K562 (cell line): ENCODE measurements at regions of chr1 and their contacts with region 1.

Region 1: GRCh38 chr1:32357614-32358013 is 4.7 kb downstream of the FAM229A start:
- DNase-seq: peak in 1 of 4 experiments; percentile 18
- ATAC-seq: no peak
- H3K4me3 ChIP-seq: no peak overlapping the region
- H3K27ac ChIP-seq: no peak overlapping the region
- H3K4me1 ChIP-seq: peaks cover 17 to 21% of the 10 kb centered on the region in 2 experiments
- H3K27me3 ChIP-seq: no peaks in the 10 kb centered on the region
- CTCF ChIP-seq: no peak
- EP300 ChIP-seq: no peak
- POLR2A ChIP-seq: no peak; the same call in 1 of the 2 replicates
- RAD21 ChIP-seq: no peak

Region 2: GRCh38 chr1:32266921-32267591 is 90.6 kb before region 1 on chr1:
- CTCF ChIA-PET with region 1: no interaction called
- POLR2A ChIA-PET with region 1: no interaction called
- in situ Hi-C with region 1: no loop called
- intact Hi-C with region 1: no loop called
- DNase-seq: no peak
- ATAC-seq: no peak
- H3K4me3 ChIP-seq: no peak overlapping the region
- H3K27ac ChIP-seq: peak overlapping the region; percentile 28; the same call in 1 of the 3 replicates
- H3K4me1 ChIP-seq: peaks cover 0 to 9% of the 10 kb centered on the region in 2 experiments; a peak in 2 of 5 replicates
- H3K27me3 ChIP-seq: no peaks in the 10 kb centered on the region
- CTCF ChIP-seq: no peak
- EP300 ChIP-seq: no peak
- POLR2A ChIP-seq: no peak
- RAD21 ChIP-seq: no peak

Region 3: DNA sequence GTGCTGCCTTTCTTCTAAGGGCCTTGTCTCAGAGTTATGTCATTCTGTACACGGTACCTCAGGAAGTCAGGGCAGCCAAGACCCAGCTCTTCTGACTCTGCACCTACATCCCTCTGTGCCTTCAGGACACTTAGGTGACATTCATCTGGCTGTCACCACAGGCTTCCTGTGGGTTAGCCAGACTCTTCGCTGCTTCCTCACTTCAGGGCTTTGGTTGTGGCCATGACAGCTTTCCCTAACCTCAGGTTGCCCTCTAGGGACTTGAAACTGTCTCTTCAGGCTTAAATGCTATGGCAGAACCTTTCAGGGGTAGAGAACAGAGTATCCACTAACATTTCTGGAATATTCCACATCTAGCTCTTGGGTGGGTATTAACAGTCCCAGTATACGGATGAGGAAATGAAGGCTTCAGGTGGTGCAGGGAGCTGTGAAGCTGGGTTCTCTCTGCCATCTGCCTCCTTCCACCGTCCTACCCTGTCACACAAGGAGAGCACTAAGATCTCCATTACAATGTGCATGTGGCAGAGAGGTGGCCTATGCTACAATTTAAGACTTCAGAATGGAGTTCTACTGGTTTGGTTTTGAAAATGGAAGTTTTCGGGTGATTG is 14.6 kb after region 1 on chr1:
- CTCF ChIA-PET with region 1: no interaction called
- POLR2A ChIA-PET with region 1: interaction called, 36 read pairs
- in situ Hi-C with region 1: no loop called
- intact Hi-C with region 1: no loop called
- DNase-seq: peak in 1 of 4 experiments; percentile 15
- ATAC-seq: peak; percentile 43
- H3K4me3 ChIP-seq: no peak overlapping the region
- H3K27ac ChIP-seq: no peak overlapping the region; the same call in 2 of the 3 replicates
- H3K4me1 ChIP-seq: no peaks in the 10 kb centered on the region
- H3K27me3 ChIP-seq: no peaks in the 10 kb centered on the region
- CTCF ChIP-seq: peak in 2 of 3 experiments; percentile 24 to 37; a peak in 3 of 6 replicates
- EP300 ChIP-seq: no peak
- POLR2A ChIP-seq: peak; percentile 16; the same call in 1 of the 2 replicates
- RAD21 ChIP-seq: peak in 1 of 2 experiments; percentile 30; a peak in 2 of 4 replicates

Region 4: GRCh38 chr1:32400876-32401631 is 43.4 kb after region 1 on chr1:
- CTCF ChIA-PET with region 1: no interaction called
- POLR2A ChIA-PET with region 1: no interaction called
- in situ Hi-C with region 1: no loop called
- intact Hi-C with region 1: no loop called
- DNase-seq: peak; percentile 90 to 92 (median 91)
- ATAC-seq: peak; percentile 96
- H3K4me3 ChIP-seq: no peak overlapping the region
- H3K27ac ChIP-seq: no peak overlapping the region
- H3K4me1 ChIP-seq: peaks cover 11 to 18% of the 10 kb centered on the region in 2 experiments; a peak in 4 of 5 replicates
- H3K27me3 ChIP-seq: no peaks in the 10 kb centered on the region
- CTCF ChIP-seq: peak; percentile 90 to 98 (median 96)
- EP300 ChIP-seq: no peak
- POLR2A ChIP-seq: no peak
- RAD21 ChIP-seq: peak; percentile 88 to 92